ENCODE measurements at regions of chr21 and their contacts with region 1.

Region 1: DNA sequence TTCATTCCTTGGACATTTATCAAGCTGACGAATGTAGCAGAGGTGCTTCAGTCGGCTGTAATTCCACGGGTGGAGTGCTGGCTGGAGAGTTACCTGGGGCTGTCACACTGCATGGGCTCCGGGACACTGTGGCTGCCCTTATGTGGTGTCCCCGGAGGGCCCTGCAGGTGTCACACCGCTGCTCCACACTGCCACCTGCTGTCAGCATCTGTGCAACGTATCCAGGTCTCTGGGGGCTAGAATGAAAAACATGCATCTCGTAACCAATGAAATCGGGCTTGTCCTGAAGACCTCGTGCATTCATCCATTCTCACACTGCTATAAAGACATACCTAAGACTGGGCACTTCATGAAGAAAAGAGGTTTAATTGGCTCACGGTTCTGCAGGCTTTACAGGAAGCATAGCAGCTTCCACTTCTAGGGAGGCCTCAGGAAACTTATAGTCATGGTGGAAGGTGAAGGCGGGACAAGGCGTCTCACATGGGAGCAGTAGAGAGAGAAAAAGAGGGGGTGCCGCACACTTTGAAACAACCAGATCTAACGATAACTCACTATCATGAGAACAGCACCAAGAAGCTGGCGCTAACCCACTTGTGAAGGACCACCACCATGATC is 46.7 kb upstream of the PCBP3 start:
- DNase-seq: peak; percentile 83
- H3K4me3 ChIP-seq: no peak overlapping the region
- H3K27ac ChIP-seq: no peak overlapping the region
- H3K4me1 ChIP-seq: no peaks in the 10 kb centered on the region
- H3K27me3 ChIP-seq: no peaks in the 10 kb centered on the region
- CTCF ChIP-seq: peak; percentile 88

Region 2: GRCh38 chr21:45478115-45478801 is 118.6 kb before region 1 on chr21:
- intact Hi-C with region 1: loop called (anchors 5 kb)
- DNase-seq: peak; percentile 68
- H3K4me3 ChIP-seq: no peak overlapping the region
- H3K27ac ChIP-seq: peak overlapping the region; percentile 23
- H3K4me1 ChIP-seq: no peaks in the 10 kb centered on the region
- H3K27me3 ChIP-seq: no peaks in the 10 kb centered on the region
- CTCF ChIP-seq: peak; percentile 88

Region 3: GRCh38 chr21:45554477-45555175 is 42.2 kb before region 1 on chr21:
- intact Hi-C with region 1: loop called (anchors 5 kb)
- DNase-seq: peak; percentile 90
- H3K4me3 ChIP-seq: peak overlapping the region; percentile 36
- H3K27ac ChIP-seq: peak overlapping the region; percentile 10
- H3K4me1 ChIP-seq: peaks cover 5% of the 10 kb centered on the region
- H3K27me3 ChIP-seq: no peaks in the 10 kb centered on the region
- CTCF ChIP-seq: peak; percentile 60

Region 4: GRCh38 chr21:45709173-45709572 is 112.4 kb after region 1 on chr21:
- intact Hi-C with region 1: no loop called
- DNase-seq: no peak
- H3K4me3 ChIP-seq: no peak overlapping the region
- H3K27ac ChIP-seq: no peak overlapping the region
- H3K4me1 ChIP-seq: no peaks in the 10 kb centered on the region
- H3K27me3 ChIP-seq: no peaks in the 10 kb centered on the region
- CTCF ChIP-seq: no peak

Region 5: DNA sequence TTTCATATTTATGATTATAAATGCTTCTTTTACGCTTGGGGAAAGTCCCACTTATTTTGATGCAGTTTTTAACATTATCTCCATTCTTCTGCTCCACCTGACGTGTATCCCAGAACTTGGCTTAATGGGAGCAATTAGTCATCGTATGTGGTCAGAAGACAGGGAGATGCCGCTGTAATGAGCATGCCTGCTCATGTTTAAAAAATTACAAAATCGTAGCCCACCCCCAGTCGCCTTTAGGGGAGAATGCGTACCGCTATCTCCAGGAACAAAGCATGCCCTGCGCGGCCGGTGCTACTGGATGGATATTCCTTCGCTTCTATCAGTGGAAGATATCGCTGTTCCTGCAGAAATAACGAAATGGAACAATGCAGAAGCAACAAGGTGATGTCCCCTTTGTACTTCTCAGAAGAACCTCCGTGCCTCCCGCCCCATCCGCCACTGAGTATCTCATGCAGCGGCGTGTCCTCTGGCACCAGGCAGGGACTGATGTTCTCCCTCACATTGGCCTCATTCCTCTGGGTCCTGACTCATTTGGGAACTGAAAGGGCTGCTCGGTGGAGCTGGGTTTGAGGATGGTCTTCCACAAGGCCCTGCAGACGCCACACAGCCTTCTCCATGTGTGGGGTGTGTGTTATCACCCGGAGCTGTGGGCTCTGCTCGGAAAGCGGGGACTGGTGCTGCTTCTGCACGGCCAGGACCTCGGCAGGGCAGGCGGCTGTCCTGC is 268.5 kb after region 1 on chr21:
- intact Hi-C with region 1: no loop called
- DNase-seq: no peak
- H3K4me3 ChIP-seq: no peak overlapping the region
- H3K27ac ChIP-seq: no peak overlapping the region
- H3K4me1 ChIP-seq: no peaks in the 10 kb centered on the region
- H3K27me3 ChIP-seq: no peaks in the 10 kb centered on the region
- CTCF ChIP-seq: no peak